ENCODE measurements at regions of chr2 and their contacts with region 1.

Region 1: DNA sequence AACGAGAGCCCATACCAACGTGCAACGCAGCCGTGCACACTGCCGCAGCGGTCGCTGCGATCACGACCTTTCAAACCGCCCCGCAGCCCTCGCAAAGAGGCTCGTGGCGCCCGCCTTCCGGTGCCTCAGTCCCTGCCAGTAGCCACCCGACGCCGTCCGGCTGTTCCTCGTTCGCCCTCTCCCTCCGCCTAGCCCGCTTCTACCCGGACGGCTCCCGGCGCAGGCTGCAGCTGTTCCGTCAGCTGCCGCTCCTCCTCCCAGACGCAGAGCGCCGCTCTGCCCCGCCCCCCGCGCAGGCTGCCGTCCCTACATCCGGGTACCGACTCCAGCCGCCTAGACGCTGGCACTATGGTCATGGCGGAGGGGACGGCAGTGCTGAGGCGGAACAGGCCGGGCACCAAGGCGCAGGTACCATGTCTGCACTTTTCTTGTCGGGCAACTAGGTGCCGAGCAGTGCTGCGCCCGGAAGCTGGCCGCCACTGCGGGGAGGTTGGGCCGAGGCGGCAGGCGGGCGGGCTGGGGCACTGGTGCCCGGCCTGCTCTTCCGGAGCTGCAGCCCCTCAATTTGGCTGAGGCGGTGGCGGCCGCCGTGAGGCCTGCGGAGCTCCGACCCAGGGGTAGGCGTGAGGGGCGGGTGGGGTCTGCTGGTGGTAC is at the start of gene MOB4:
- DNase-seq: peak; percentile 95
- H3K4me3 ChIP-seq: peak within 1 kb of the TSS; percentile 59 to 95 (median 84)
- H3K27ac ChIP-seq: peak within 1 kb of the TSS; percentile 91 to 98 (median 97)
- H3K4me1 ChIP-seq: peaks cover 0 to 7% of the 10 kb centered on the region in 2 donors
- H3K27me3 ChIP-seq: no peaks in the 10 kb centered on the region
- CTCF ChIP-seq: peak in 1 of 6 experiments; percentile 29
- POLR2A ChIP-seq: peak; percentile 33 to 99
- total RNA-seq, gene MOB4: 24.7 to 36.1 (median 28.6) TPM

Region 2: DNA sequence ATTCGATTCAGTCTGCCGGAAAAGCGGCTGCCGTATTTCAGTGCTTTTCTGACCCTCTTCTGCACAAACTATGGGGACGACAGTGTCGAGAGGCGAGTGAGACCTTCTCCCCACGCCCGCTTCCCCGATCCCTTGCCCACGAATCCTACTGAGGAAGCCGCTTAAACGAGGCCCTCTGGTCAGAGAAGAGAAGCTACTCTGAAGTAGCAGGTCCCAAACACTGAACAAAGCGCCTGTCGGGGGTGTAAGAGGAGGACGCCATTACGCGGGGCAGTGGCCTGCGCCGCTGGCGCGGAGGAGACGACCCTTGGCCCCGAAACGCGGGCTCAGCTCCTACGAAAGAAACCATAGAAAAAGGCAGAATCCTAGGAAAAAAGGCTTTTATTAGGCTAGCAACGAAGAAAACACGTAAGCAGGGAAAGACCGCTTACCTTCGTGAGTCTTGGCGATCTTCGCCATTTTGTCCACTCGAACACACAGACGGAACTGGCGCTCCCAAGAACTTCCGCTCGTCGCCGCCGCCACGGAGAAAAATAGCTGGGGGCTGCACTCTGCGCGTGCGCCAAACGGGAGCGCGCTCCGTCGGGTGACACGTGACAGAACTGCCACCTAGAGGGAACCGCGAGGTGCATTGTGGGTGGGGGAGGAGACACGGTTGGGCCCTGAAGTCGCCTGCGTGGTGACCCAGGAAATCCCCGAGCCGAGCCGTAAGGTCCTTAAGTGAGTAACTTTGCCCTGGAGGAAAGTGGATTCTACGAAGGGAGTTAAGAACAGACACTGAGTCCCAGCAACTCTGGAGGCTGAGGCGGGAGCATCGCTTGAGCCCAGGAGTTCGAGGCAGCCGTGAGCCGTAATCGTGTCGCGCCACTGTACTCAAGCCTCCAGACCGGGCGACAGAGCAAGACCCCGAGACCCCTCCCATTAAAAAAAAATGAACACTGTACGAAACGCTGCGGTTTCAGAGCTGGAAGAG is 81.0 kb before region 1 on chr2 and contains the start of gene SF3B1:
- intact Hi-C with region 1: loop called (anchors 10 kb)
- DNase-seq: peak; percentile 98
- H3K4me3 ChIP-seq: peak within 1 kb of the TSS; percentile 73 to 98 (median 95)
- H3K27ac ChIP-seq: peak within 1 kb of the TSS; percentile 87 to 95 (median 91)
- H3K4me1 ChIP-seq: peaks cover 26 to 39% of the 10 kb centered on the region in 2 donors
- H3K27me3 ChIP-seq: no peaks in the 10 kb centered on the region
- CTCF ChIP-seq: peak in 1 of 6 experiments; percentile 32
- POLR2A ChIP-seq: peak in 1 of 2 donors; percentile 95
- total RNA-seq, gene SF3B1: 297 to 948 (median 607) TPM

Measured in thyroid gland (tissue), 4 donors.